ENCODE measurements at regions of chr1 and their contacts with region 1.

Region 1: DNA sequence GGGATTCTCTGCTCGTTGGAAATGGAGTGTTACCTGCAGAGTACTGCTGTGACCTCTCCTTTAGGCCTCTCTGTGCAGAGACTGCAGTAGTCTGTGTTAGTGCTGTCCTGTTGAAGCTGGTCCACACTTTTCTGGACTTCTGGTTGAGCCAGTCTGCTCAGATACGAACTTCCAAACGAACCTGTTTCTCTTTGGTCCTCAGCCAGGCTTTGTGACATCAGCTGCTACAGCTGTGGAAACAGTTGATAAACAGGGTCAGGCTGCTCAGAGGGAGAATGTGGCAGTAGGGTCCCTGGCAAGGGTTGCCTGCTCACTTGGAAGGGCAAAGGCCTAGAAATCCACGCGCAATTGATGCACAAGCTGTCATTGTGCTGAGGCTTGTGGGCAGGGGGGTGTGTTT is 98.8 kb downstream of the NOS1AP start:
- DNase-seq: peak; percentile 53 to 82
- H3K4me3 ChIP-seq: no peak overlapping the region
- H3K27ac ChIP-seq: no peak overlapping the region
- H3K4me1 ChIP-seq: peaks cover 29% of the 10 kb centered on the region
- H3K27me3 ChIP-seq: no peaks in the 10 kb centered on the region
- CTCF ChIP-seq: no peak

Region 2: DNA sequence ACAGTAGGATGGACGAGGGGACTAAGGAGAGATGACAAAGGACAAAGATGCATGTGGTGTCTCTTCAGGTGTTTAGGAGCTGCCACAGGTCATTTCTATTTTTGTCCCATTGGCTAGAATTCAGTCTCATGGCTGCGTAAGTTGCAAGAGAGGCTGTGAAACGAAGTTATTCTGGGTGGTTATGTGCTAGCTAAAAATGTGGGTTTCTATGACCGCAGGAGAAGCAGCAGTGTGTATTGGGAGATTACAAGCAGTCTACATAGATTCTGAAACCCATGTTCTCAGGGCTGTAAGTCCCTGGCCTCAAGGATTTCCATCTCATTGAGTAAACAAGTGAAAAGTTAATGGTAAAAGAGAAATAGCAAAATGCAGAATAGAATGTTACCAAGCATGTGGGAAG is 97.7 kb after region 1 on chr1:
- CTCF ChIA-PET with region 1: no interaction called
- POLR2A ChIA-PET with region 1: no interaction called
- intact Hi-C with region 1: loop called (anchors 5 kb)
- DNase-seq: no peak
- H3K4me3 ChIP-seq: no peak overlapping the region
- H3K27ac ChIP-seq: no peak overlapping the region
- H3K4me1 ChIP-seq: no peaks in the 10 kb centered on the region
- H3K27me3 ChIP-seq: no peaks in the 10 kb centered on the region
- CTCF ChIP-seq: no peak

Region 3: DNA sequence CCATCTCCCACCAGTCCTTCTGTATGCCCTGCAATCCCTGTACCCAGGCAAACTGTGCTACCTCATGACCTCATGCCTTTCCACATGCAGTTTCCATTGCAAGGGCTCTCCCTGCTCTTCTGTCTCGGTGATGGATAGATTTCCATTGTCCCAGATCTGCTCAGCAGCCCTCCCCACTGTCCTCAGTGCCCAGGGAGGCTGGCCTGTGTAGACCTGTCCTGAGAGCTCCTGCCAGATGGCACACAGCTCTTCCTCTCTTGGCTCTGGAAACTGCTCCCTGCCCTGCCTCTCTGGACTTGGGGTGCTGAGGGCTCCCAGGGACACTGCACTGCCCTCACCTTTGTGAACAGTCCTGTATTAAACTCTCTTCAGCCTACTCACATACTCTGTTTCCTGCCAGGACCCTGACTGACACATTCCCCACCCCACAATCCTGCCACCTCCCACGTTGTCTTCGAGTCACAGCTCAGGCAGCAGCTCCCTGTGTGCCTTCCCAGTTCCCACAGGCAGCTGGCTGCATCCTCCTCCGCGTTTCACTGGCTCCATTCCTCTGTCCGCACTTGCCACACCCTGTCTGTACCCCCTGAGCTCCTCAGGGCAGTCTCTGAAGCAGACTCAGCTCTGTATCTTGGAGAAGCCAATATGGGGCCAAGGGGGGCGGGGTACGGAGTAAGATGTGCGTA is 151.4 kb after region 1 on chr1:
- CTCF ChIA-PET with region 1: no interaction called
- POLR2A ChIA-PET with region 1: no interaction called
- intact Hi-C with region 1: no loop called
- DNase-seq: no peak
- H3K4me3 ChIP-seq: no peak overlapping the region
- H3K27ac ChIP-seq: no peak overlapping the region
- H3K4me1 ChIP-seq: no peaks in the 10 kb centered on the region
- H3K27me3 ChIP-seq: no peaks in the 10 kb centered on the region
- CTCF ChIP-seq: no peak